Psoas muscle (tissue), 8 donors: ENCODE measurements at regions of chr17 and their contacts with region 1.

Region 1: DNA sequence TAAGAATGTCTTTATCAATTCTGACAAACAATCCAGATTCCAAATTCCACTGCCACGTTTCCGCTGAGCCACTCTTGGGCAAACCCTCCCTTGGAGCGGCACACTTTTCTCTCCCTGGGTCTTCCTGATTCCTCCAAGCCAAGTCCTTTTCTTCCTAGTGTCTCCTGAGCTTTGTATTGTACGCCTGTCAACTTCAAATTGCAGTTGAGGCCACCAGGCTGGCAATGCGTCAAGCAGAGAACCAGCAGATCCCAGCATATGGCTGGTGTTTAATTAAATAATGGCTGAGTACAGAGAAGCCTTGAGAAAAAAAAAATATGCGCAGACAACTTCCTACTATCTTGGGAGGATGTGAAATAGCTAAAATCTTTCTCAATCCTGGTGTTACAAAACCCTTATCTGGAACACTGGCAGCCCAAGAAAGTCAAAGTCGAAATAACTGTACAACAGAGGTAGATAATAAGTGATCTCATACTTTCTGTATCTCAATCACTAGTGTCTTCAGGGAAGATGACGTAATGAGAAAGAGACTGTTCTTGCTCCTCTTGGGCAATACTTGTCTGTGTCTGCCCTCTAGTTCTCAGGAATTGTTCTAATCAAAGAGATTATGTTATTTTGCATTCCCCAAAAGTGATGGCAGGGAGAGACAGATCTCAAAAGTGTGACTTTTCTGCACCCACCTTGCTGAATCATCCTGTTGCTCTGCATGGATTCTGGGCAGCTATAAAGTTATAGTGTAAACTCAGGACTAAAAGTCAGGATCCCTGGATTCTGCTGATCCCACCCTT is 15.0 kb downstream of the SMIM36 start:
- DNase-seq: no peak
- ATAC-seq: no peak
- H3K4me3 ChIP-seq: no peak overlapping the region
- H3K27ac ChIP-seq: no peak overlapping the region
- H3K4me1 ChIP-seq: peaks cover 10% of the 10 kb centered on the region
- H3K27me3 ChIP-seq: no peaks in the 10 kb centered on the region
- CTCF ChIP-seq: no peak

Region 2: GRCh38 chr17:55444471-55445441 is 51.5 kb before region 1 on chr17:
- intact Hi-C with region 1: no loop called
- DNase-seq: no peak
- ATAC-seq: no peak
- H3K4me3 ChIP-seq: no peak overlapping the region
- H3K27ac ChIP-seq: no peak overlapping the region
- H3K4me1 ChIP-seq: peaks cover 5% of the 10 kb centered on the region
- H3K27me3 ChIP-seq: no peaks in the 10 kb centered on the region
- CTCF ChIP-seq: no peak

Region 3: GRCh38 chr17:55458977-55459376 is 37.3 kb before region 1 on chr17:
- intact Hi-C with region 1: loop called in 1 of 2 experiments (anchors 5 kb)
- DNase-seq: no peak
- ATAC-seq: no peak
- H3K4me3 ChIP-seq: no peak overlapping the region
- H3K27ac ChIP-seq: no peak overlapping the region
- H3K4me1 ChIP-seq: peaks cover 12% of the 10 kb centered on the region
- H3K27me3 ChIP-seq: no peaks in the 10 kb centered on the region
- CTCF ChIP-seq: no peak